ENCODE measurements at regions of chr18 and their contacts with region 1.

Region 1: DNA sequence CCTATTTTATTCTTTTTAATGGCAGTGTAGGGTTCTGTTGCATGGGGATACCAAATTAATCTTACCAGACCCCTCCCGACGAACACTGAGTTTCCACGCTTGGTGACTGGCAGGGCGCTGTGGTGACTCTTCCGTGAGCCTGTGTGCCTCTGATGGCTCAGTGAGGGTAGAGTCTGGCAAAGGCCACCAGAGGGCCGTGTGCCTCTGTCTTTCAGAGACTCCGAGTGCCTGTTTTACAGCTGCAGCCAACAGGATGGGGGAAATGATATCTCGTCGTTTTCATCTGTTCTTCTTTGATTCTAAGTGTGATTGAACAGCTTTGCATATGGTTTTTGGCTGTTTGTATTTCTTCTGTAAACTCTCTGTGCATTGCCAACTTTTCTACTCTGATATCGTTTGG is 99.8 kb downstream of the ZNF236 start:
- DNase-seq: peak; percentile 39
- ATAC-seq: peak; percentile 100
- H3K4me3 Mint-ChIP-seq: peak overlapping the region; percentile 13
- H3K27ac Mint-ChIP-seq: peak overlapping the region; percentile 57
- H3K4me1 Mint-ChIP-seq: peaks cover 8% of the 10 kb centered on the region
- H3K27me3 Mint-ChIP-seq: no peaks in the 10 kb centered on the region
- CTCF ChIP-seq: no peak

Region 2: DNA sequence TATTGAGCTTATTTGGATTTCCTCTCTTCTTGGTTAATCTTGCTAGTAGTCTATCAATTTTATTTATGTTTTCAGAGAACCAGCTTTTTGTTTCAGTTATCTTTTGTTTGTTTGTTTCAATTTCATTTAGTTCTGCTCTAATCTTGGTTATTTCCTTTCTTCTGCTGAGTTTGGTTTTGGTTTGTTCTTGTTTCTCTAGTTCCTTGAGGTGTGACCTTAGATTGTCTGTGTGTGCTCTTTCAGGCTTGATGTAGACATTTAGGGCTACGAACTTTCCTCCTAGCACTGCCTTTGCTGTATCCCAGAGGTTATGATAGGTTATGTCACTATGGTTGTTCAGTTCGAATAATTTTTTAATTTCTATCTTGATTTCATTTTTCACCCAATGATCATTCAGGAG is 41.8 kb after region 1 on chr18:
- CTCF ChIA-PET with region 1: interaction called, 24 read pairs
- POLR2A ChIA-PET with region 1: interaction called, 7 read pairs
- intact Hi-C with region 1: no loop called
- DNase-seq: no peak
- ATAC-seq: no peak
- H3K4me3 Mint-ChIP-seq: peak overlapping the region; percentile 45
- H3K27ac Mint-ChIP-seq: no peak overlapping the region
- H3K4me1 Mint-ChIP-seq: no peaks in the 10 kb centered on the region
- H3K27me3 Mint-ChIP-seq: no peaks in the 10 kb centered on the region
- CTCF ChIP-seq: no peak

Region 3: DNA sequence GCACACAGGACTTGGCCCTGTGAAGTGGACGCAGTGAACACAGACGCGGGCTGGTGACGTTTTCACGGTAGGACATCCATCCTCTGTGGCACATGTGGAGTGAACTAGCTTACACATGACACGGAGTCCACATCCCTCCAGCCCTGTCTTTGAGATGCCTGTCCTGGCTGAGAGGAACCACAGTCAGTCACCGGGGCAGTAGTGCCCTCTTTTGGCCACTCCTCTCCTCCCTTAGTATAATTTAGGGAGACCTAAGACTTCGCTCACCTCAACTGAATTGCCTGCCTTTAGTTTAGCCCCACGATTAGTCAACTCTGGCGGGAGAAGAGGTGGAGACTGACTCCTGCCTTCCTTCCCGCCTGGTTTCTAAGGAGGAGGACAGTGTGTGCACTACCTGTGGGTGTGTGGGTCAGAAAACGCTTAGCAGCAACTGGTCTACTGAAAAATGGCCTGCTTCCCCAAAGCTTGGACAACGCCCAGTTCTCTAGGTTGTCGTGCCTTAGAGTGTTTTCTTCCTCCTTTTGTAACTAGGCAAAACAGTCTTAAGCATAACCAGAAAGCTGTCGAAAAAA is 139.9 kb after region 1 on chr18:
- CTCF ChIA-PET with region 1: interaction called, 14 read pairs
- POLR2A ChIA-PET with region 1: interaction called, 3 read pairs
- intact Hi-C with region 1: no loop called
- DNase-seq: no peak
- ATAC-seq: peak; percentile 30
- H3K4me3 Mint-ChIP-seq: peak overlapping the region; percentile 55
- H3K27ac Mint-ChIP-seq: peak overlapping the region; percentile 94
- H3K4me1 Mint-ChIP-seq: peaks cover 83% of the 10 kb centered on the region
- H3K27me3 Mint-ChIP-seq: no peaks in the 10 kb centered on the region
- CTCF ChIP-seq: no peak

Region 4: DNA sequence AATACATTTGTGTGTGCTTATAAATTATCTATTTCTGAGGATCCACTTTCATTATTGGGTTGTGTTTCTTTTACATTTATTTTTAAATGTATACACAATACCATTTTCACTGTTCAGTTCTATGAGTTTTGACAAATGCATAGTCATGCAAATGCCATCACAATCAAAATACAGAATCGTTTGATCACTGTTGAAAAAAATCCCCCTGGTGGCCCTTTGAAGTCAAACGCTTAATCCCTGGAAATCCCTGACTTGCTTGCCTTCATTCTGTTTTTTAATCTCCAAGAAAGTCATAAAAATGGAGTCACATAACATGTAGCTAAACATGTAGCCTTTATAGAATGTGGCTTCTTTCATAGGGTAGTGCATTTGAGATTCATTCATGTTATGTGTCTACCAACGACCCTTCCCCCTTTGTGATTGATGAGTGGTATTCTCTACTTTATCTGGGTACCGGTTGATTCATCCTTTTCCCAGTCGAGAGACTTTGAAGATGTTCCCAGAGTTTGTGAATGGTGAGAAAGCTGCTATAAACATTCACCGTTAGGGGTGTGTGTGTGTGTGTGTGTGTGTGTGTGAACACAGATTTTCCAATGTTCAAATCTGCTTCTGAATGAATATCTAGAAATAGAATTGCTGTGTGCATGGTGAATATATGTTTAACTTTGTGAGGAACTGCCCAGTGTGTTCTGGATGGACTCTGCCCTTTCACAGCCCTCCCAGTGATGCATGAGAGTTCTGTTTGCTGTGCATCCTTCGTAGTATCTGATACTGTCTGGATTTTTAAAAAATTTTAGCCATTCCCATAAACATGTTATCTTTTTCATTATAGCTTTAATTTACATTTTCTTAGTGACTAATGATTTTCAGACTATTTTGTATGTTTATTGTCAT is 501.1 kb after region 1 on chr18:
- CTCF ChIA-PET with region 1: no interaction called
- POLR2A ChIA-PET with region 1: no interaction called
- intact Hi-C with region 1: loop called (anchors 10 kb)
- DNase-seq: no peak
- ATAC-seq: no peak
- H3K4me3 Mint-ChIP-seq: no peak overlapping the region
- H3K27ac Mint-ChIP-seq: no peak overlapping the region
- H3K4me1 Mint-ChIP-seq: no peaks in the 10 kb centered on the region
- H3K27me3 Mint-ChIP-seq: peaks cover 2% of the 10 kb centered on the region
- CTCF ChIP-seq: no peak

Region 5: DNA sequence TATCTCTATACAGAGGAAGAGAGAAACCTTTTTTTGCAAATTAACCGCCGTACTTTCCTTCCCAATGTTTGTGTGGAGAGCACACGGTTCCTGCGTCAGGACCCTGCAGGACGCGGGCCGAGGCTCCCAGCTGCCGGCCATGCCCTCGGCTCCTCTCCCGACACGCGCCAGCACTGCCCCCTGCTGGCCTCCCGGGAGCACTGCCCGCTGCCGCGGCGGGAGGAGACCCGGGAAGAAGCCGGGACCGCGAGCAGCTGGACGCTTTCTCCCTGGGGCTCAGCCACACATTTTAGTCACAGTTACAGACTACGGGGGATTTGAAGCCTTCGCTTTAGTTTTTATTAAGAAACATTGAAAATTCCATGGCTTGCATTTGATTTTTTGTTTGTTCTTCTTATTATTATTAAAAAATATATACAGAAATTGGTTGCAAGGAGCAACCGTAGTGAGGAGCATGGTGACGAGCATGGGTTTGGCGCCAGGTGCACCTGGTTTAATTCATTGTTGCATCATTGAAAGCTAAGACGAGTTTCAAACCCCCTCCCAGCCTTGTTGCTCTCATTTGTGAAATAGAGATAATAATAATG is 728.8 kb after region 1 on chr18:
- CTCF ChIA-PET with region 1: interaction called, 3 read pairs
- POLR2A ChIA-PET with region 1: no interaction called
- intact Hi-C with region 1: loop called (anchors 1 kb)
- DNase-seq: peak; percentile 35
- ATAC-seq: peak; percentile 47
- H3K4me3 Mint-ChIP-seq: no peak overlapping the region
- H3K27ac Mint-ChIP-seq: no peak overlapping the region
- H3K4me1 Mint-ChIP-seq: no peaks in the 10 kb centered on the region
- H3K27me3 Mint-ChIP-seq: peaks cover 23% of the 10 kb centered on the region
- CTCF ChIP-seq: no peak